SK-N-SH (cell line): ENCODE measurements at regions of chrX and their contacts with region 1.

Region 1: GRCh38 chrX:154397819-154398724 is at the start of gene RPL10:
- DNase-seq: peak; percentile 92
- H3K4me3 ChIP-seq: peak within 1 kb of the TSS; percentile 81
- H3K27ac ChIP-seq: peak within 1 kb of the TSS; percentile 96 to 97
- H3K4me1 ChIP-seq: peaks cover 0 to 6% of the 10 kb centered on the region in 2 experiments; a peak in 1 of 4 replicates
- H3K27me3 ChIP-seq: no peaks in the 10 kb centered on the region
- CTCF ChIP-seq: no peak
- EP300 ChIP-seq: no peak
- RAD21 ChIP-seq: no peak
- polyA plus RNA-seq, gene RPL10: 4,562 and 7,172 TPM in 2 replicates

Region 2: DNA sequence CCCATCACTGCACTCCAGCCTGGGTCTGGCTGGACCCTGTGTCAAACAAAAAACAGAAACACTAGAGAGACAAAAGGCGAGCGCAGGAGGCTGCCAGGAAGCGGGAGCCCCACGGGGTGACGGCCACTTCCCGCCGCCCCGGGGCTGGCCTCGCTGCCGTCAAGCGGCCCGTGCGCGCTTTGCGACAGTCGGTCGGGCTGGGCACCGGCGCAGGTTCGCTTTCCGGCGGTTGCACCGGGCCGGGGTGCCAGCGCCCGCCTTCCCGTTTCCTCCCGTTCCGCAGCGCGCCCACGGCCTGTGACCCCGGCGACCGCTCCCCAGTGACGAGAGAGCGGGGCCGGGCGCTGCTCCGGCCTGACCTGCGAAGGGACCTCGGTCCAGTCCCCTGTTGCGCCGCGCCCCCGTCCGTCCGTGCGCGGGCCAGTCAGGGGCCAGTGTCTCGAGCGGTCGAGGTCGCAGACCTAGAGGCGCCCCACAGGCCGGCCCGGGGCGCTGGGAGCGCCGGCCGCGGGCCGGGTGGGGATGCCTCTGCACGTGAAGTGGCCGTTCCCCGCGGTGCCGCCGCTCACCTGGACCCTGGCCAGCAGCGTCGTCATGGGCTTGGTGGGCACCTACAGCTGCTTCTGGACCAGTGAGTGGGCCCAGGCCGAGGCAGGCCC is 13.4 kb after region 1 on chrX and contains the start of gene TAFAZZIN:
- CTCF ChIA-PET with region 1: interaction called, 7 read pairs
- POLR2A ChIA-PET with region 1: interaction called, 25 read pairs
- DNase-seq: peak; percentile 86
- H3K4me3 ChIP-seq: peak within 1 kb of the TSS; percentile 57 to 63
- H3K27ac ChIP-seq: peak within 1 kb of the TSS; percentile 69 to 70
- H3K4me1 ChIP-seq: peaks cover 4 to 9% of the 10 kb centered on the region in 2 experiments; a peak in 1 of 4 replicates
- H3K27me3 ChIP-seq: no peaks in the 10 kb centered on the region; the same call in 1 of the 2 replicates
- CTCF ChIP-seq: no peak
- EP300 ChIP-seq: no peak
- RAD21 ChIP-seq: no peak
- polyA plus RNA-seq, gene TAFAZZIN: 34.0 and 35.7 TPM in 2 replicates

Region 3: DNA sequence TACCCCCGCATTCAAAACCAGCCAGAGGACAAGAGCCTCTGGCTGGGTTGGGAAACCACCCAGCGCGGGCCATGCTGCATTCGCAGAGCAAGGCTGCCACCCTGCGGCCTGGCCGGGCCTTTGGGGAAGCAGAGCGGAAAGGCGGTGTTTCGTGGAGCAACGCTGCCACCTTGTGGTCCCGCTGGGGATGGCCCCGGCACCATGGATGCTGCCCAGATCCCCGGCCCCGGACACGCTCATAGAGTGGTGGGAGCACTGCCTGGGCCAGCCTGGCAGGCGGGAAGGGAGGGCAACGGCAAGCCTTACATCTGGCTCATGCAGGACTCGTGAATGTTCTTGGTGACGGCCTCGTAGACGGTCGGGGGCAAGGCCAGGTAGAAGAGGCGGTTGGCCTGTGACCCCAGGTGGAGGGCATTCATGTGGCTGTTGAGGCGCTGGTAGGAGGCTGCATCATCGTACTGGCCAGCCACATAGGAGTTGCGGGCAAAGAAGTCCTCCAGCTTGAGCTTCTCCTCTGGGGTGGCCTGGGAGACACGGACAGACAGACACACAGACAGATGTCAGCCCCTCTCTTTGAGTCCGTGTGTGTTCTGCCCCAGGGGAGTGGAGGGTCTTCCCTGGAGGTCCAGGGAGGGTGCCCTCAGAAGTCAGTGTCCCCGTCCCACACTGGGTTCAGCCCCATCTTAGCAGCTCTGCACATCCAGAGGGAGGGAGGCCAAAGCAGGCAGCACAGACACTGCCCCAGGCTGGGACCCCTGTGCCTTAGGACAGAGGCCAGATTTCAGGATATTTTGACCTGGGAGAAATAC is 137.0 kb after region 1 on chrX:
- CTCF ChIA-PET with region 1: interaction called, 10 read pairs
- POLR2A ChIA-PET with region 1: interaction called, 9 read pairs
- DNase-seq: peak; percentile 95
- H3K4me3 ChIP-seq: no peak overlapping the region
- H3K27ac ChIP-seq: no peak overlapping the region
- H3K4me1 ChIP-seq: peaks cover 0 to 10% of the 10 kb centered on the region in 2 experiments; a peak in 1 of 4 replicates
- H3K27me3 ChIP-seq: no peaks in the 10 kb centered on the region; the same call in 1 of the 2 replicates
- CTCF ChIP-seq: peak; percentile 98
- EP300 ChIP-seq: no peak
- RAD21 ChIP-seq: peak; percentile 99

Region 4: DNA sequence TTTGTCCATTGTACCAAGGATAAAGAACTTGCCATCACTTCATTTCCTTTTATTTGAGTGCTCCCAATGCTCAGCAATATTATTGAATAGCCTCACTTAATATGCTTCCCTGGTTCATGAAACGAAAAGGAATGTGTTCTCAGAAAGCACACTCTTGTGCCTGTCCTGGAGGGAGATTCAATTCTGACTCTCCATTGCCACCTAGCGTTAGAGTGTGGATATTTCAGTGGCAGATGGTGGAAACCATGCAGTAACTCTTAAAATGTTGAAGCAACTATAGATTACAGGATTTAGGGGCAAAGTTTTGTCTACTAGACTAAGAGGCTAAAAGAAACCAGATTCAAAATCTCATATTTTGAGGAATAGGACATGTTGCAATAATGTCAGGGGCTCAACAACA is 316.9 kb after region 1 on chrX:
- CTCF ChIA-PET with region 1: no interaction called
- POLR2A ChIA-PET with region 1: no interaction called
- DNase-seq: peak; percentile 63
- H3K4me3 ChIP-seq: no peak overlapping the region
- H3K27ac ChIP-seq: no peak overlapping the region
- H3K4me1 ChIP-seq: no peaks in the 10 kb centered on the region
- H3K27me3 ChIP-seq: no peaks in the 10 kb centered on the region
- CTCF ChIP-seq: peak; percentile 88
- EP300 ChIP-seq: no peak
- RAD21 ChIP-seq: peak; percentile 78